ENCODE measurements at regions of chr3 and their contacts with region 1.

Region 1: DNA sequence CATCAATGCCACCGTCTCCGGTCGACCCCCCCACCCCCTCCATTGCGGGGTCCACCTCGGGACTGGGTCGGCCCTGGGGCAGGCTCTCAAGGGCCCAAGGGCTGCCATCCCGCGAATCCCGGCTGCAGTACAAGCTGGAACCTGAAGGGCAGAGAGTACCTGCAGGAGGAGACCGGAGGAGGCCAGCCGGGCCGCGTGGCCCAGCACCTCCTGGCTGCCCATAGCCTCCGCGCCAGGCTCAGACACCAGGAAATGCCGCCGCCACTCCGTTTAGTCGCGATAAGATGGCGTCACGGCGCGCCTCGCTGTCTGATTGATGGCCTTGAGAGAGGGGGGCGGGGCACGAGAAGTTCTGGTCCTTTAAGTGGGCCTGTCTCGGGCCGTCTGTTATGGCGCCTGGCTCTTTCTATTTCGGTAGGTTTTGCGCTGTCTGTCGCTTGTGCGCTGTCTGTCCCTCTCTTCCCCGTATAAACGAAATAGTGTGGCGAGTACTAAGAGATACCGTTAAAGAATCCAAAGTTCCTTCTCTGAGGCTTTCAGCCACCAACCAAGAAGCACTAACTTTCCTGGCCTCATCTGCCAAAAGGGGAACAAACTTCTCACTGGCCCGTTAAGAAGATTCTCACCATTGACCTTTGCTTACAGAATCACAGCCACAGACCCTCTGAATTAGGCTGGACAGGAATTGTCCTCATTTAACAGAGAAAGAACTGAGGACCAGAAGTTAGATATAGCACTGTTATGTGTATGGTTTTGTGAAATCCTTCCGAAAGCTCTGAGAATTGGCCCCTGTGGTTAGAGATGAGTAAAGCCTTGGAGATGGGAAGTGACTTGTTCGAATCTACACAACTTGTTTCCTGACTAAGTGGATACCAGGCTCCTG is at the start of gene RFT1:
- DNase-seq: peak; percentile 87 to 94
- H3K4me3 ChIP-seq: peak within 1 kb of the TSS; percentile 82
- H3K27ac ChIP-seq: peak within 1 kb of the TSS; percentile 36
- H3K4me1 ChIP-seq: peaks cover 20% of the 10 kb centered on the region
- H3K27me3 ChIP-seq: no peaks in the 10 kb centered on the region
- CTCF ChIP-seq: 0 out of 2 replicates have a peak, but pooled peaks have one; percentile 29
- total RNA-seq, gene RFT1: 30.8 and 31.0 TPM in 2 replicates

Region 2: GRCh38 chr3:53155760-53156159 is 25.3 kb after region 1 on chr3:
- CTCF ChIA-PET with region 1: interaction called, 3 read pairs
- POLR2A ChIA-PET with region 1: interaction called, 3 read pairs
- intact Hi-C with region 1: loop called (anchors 2 kb)
- DNase-seq: peak; percentile 90 to 91
- H3K4me3 ChIP-seq: peak overlapping the region; percentile 39; the same call in 1 of the 2 replicates
- H3K27ac ChIP-seq: peak overlapping the region; percentile 82
- H3K4me1 ChIP-seq: peaks cover 97% of the 10 kb centered on the region
- H3K27me3 ChIP-seq: no peaks in the 10 kb centered on the region
- CTCF ChIP-seq: no peak

Region 3: GRCh38 chr3:53195602-53196574 is 65.5 kb after region 1 on chr3:
- CTCF ChIA-PET with region 1: interaction called, 7 read pairs
- POLR2A ChIA-PET with region 1: interaction called, 15 read pairs
- intact Hi-C with region 1: loop called (anchors 1 kb)
- DNase-seq: peak in 1 of 2 experiments; percentile 51
- H3K4me3 ChIP-seq: no peak overlapping the region
- H3K27ac ChIP-seq: no peak overlapping the region
- H3K4me1 ChIP-seq: peaks cover 8% of the 10 kb centered on the region
- H3K27me3 ChIP-seq: no peaks in the 10 kb centered on the region
- CTCF ChIP-seq: peak; percentile 93